Right cardiac atrium (tissue), 5 donors: ENCODE measurements at regions of chr10 and their contacts with region 1.

Region 1: DNA sequence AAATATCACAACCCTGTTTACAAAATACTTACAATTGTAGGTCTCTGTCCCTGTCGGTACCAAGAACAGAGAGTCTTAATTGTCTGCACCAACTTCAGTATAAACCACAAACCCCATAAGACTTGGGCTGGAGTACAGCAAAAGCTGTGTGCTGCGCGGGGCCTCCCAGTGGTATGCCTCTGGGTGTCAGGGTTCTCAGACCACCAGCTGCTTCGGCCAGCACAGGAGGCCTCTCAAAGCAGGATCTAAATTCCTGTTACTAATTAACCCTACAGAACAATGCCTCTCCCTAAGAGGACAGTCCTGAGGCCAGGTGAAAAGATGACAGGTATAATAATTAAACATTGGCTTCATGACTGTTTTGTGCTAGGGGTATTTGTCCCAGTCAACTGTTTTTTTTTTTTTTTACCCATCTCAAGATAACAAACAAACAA is 957 bp upstream of the SVIL start:
- DNase-seq: no peak
- ATAC-seq: peak; percentile 38 to 47
- H3K4me3 ChIP-seq: peak overlapping the region; percentile 26
- H3K27ac ChIP-seq: peak overlapping the region; percentile 99
- H3K4me1 ChIP-seq: peaks cover 5% of the 10 kb centered on the region
- H3K27me3 ChIP-seq: no peaks in the 10 kb centered on the region

Region 2: GRCh38 chr10:29160110-29160669 is 475.5 kb before region 1 on chr10:
- intact Hi-C with region 1: no loop called
- DNase-seq: no peak
- ATAC-seq: no peak
- H3K4me3 ChIP-seq: no peak overlapping the region
- H3K27ac ChIP-seq: no peak overlapping the region
- H3K4me1 ChIP-seq: no peaks in the 10 kb centered on the region
- H3K27me3 ChIP-seq: no peaks in the 10 kb centered on the region

Region 3: GRCh38 chr10:29598851-29599311 is 36.8 kb before region 1 on chr10:
- intact Hi-C with region 1: loop called in 1 of 4 experiments (anchors 5 kb)
- DNase-seq: peak; percentile 34 to 69 (median 61)
- ATAC-seq: peak; percentile 80 to 83
- H3K4me3 ChIP-seq: no peak overlapping the region
- H3K27ac ChIP-seq: peak overlapping the region; percentile 97
- H3K4me1 ChIP-seq: peaks cover 10% of the 10 kb centered on the region
- H3K27me3 ChIP-seq: no peaks in the 10 kb centered on the region

Region 4: GRCh38 chr10:29725133-29725720 is 89.5 kb after region 1 on chr10:
- intact Hi-C with region 1: loop called in 3 of 4 experiments (anchors 5 to 10 kb)
- DNase-seq: peak; percentile 42 to 65 (median 64)
- ATAC-seq: peak; percentile 92 to 96
- H3K4me3 ChIP-seq: no peak overlapping the region
- H3K27ac ChIP-seq: peak overlapping the region; percentile 91
- H3K4me1 ChIP-seq: peaks cover 9% of the 10 kb centered on the region
- H3K27me3 ChIP-seq: no peaks in the 10 kb centered on the region